Cardiac septum (tissue), 1 donor: ENCODE measurements at regions of chr5 and their contacts with region 1.

Region 1: GRCh38 chr5:142446131-142446959 is 121.5 kb upstream of the SPRY4 start:
- DNase-seq: no peak

Region 2: DNA sequence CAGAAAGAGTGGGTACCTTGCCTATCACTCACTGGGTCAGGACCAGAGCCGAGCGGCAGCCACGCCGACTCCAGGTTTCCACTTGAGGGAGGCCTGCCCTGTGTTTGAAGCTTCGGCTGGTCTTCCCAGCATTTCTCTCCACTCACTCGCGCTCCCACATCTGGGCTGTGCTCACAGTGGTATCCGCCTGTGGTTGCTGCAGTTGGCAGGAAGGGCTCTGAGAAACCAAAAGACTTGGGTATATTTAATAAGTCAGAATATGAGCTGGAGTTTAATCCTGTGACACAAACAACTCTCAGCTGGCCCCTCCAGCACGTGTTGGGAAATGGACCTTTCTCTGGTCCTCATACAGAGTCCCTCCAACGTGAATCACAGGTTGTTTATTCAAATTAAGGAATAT is 192.4 kb before region 1 on chr5:
- intact Hi-C with region 1: no loop called
- DNase-seq: no peak

Region 3: DNA sequence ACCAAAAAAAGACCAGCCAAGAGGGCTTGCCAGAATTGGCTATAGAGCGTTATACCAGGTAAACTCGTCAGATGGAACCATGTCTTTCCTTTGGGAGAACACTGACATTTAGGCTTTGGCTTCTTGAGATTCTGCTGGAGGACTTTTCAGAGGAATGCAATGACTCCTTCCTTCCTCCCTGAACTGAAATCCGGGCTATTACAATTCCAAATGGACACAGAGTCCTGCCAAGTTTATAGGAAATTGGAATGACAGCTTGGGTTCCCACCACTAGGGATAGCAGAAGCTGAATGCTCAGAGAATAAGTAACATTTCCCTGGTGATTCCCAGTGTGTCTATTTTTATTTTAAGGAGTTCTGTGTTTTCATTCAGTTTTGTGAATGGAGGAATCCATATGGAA is 96.6 kb after region 1 on chr5:
- intact Hi-C with region 1: loop called (anchors 5 kb)
- DNase-seq: no peak